ENCODE measurements at regions of chr16 and their contacts with region 1.

Region 1: GRCh38 chr16:85275533-85276249 is 163.4 kb upstream of the CIBAR2 start:
- DNase-seq: peak; percentile 93
- ATAC-seq: peak; percentile 85
- H3K4me3 Mint-ChIP-seq: no peak overlapping the region
- H3K27ac Mint-ChIP-seq: no peak overlapping the region
- H3K4me1 Mint-ChIP-seq: peaks cover 26% of the 10 kb centered on the region
- H3K27me3 Mint-ChIP-seq: no peaks in the 10 kb centered on the region
- CTCF ChIP-seq: peak; percentile 66

Region 2: DNA sequence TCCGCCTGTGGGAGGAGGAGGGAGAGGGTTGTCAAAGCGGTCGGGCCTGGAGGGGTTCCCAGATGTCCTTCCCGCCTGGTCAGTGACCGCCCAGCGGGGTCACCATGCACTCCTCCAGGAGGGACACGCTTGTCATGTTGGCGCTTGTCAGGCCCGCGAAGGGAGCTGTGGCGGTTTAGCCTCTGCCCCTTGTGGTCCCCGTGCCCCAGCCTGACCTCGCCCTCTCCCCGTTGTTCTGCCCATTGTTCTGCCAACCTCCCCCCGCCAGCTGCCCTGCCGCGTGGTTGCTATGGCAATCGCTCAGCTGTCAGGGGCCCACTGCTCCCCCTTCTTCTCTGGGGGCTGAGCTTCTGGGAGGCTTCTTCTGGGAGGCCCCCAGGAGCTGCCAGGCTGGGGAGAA is 17.1 kb before region 1 on chr16:
- CTCF ChIA-PET with region 1: interaction called, 20 read pairs
- POLR2A ChIA-PET with region 1: no interaction called
- DNase-seq: no peak
- ATAC-seq: no peak
- H3K4me3 Mint-ChIP-seq: no peak overlapping the region
- H3K27ac Mint-ChIP-seq: no peak overlapping the region
- H3K4me1 Mint-ChIP-seq: no peaks in the 10 kb centered on the region
- H3K27me3 Mint-ChIP-seq: no peaks in the 10 kb centered on the region
- CTCF ChIP-seq: no peak

Region 3: GRCh38 chr16:85291302-85292148 is 15.8 kb after region 1 on chr16:
- CTCF ChIA-PET with region 1: interaction called, 21 read pairs
- POLR2A ChIA-PET with region 1: no interaction called
- DNase-seq: no peak
- ATAC-seq: peak; percentile 27; the same call in 1 of the 2 replicates
- H3K4me3 Mint-ChIP-seq: no peak overlapping the region
- H3K27ac Mint-ChIP-seq: no peak overlapping the region
- H3K4me1 Mint-ChIP-seq: no peaks in the 10 kb centered on the region
- H3K27me3 Mint-ChIP-seq: no peaks in the 10 kb centered on the region
- CTCF ChIP-seq: no peak

Region 4: GRCh38 chr16:85296859-85297660 is 21.4 kb after region 1 on chr16:
- CTCF ChIA-PET with region 1: interaction called, 21 read pairs
- POLR2A ChIA-PET with region 1: no interaction called
- DNase-seq: peak; percentile 78
- ATAC-seq: peak; percentile 93
- H3K4me3 Mint-ChIP-seq: no peak overlapping the region
- H3K27ac Mint-ChIP-seq: no peak overlapping the region
- H3K4me1 Mint-ChIP-seq: peaks cover 17% of the 10 kb centered on the region
- H3K27me3 Mint-ChIP-seq: no peaks in the 10 kb centered on the region
- CTCF ChIP-seq: peak; percentile 71

Region 5: DNA sequence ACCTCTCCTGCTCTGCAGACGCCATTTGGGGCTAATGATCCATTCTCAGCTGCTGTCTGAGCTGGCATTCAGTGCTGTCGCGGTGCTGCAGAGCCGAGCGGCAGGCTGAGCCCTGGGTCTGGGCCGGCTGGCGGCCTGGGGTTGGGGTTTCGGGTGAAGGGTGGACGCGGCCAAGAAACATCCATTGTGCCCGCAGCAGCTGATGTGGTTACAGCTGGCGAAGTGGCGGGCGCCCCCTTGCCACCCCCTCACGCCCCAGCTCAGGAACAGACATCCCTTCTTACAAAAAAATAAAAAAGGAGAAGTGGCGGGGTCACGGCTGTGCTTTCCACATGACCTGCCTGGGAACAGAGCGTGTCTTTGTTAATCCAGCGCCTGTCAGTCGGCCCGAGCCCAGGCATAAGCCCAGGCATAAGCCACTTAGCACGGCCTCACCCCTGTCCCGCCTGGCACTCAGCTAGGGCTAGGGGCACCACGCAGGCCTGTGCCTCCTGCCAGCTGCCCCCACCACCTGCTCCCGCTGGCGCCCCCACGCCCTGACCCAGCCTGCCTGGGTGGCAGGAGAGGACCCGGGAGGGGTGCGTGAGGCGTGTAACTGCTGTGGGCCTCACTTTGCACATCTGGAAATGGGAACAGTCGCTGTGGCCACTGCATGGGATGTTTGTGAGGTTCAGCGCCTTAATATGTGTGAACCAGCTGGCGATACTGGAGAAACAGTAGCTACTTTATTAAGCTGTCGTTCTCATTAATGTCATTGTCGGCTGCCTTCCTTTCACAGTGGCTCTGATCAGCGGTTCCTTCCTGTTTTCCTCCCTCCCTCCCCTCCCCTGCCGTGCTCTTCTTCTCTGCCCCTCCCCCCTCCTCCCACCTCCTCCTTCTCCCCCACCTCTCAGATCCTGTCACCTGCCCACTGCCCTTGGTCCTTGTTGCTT is 34.2 kb after region 1 on chr16:
- CTCF ChIA-PET with region 1: interaction called, 10 read pairs
- POLR2A ChIA-PET with region 1: no interaction called
- DNase-seq: no peak
- ATAC-seq: peak; percentile 7
- H3K4me3 Mint-ChIP-seq: no peak overlapping the region
- H3K27ac Mint-ChIP-seq: no peak overlapping the region
- H3K4me1 Mint-ChIP-seq: peaks cover 68% of the 10 kb centered on the region
- H3K27me3 Mint-ChIP-seq: no peaks in the 10 kb centered on the region; the same call in 1 of the 2 replicates
- CTCF ChIP-seq: no peak

Region 6: GRCh38 chr16:85357924-85358505 is 82.3 kb after region 1 on chr16:
- CTCF ChIA-PET with region 1: no interaction called
- POLR2A ChIA-PET with region 1: no interaction called
- DNase-seq: no peak
- ATAC-seq: no peak
- H3K4me3 Mint-ChIP-seq: no peak overlapping the region
- H3K27ac Mint-ChIP-seq: no peak overlapping the region
- H3K4me1 Mint-ChIP-seq: peaks cover 12% of the 10 kb centered on the region
- H3K27me3 Mint-ChIP-seq: no peaks in the 10 kb centered on the region
- CTCF ChIP-seq: no peak

Measured in WTC11 (cell line).